ENCODE measurements at regions of chr20 and their contacts with region 1.

Region 1: GRCh38 chr20:24470746-24471582 is 1.5 kb downstream of the SYNDIG1 start:
- DNase-seq: no peak
- ATAC-seq: no peak
- H3K4me3 ChIP-seq: no peak overlapping the region
- H3K27ac ChIP-seq: no peak overlapping the region
- H3K4me1 ChIP-seq: no peaks in the 10 kb centered on the region
- H3K27me3 ChIP-seq: peaks cover 93% of the 10 kb centered on the region
- CTCF ChIP-seq: no peak

Region 2: GRCh38 chr20:23753589-23753988 is 717.4 kb before region 1 on chr20:
- CTCF ChIA-PET with region 1: no interaction called
- POLR2A ChIA-PET with region 1: no interaction called
- intact Hi-C with region 1: no loop called
- DNase-seq: no peak
- ATAC-seq: no peak
- H3K4me3 ChIP-seq: no peak overlapping the region
- H3K27ac ChIP-seq: no peak overlapping the region
- H3K4me1 ChIP-seq: peaks cover 15% of the 10 kb centered on the region
- H3K27me3 ChIP-seq: no peaks in the 10 kb centered on the region
- CTCF ChIP-seq: no peak

Region 3: DNA sequence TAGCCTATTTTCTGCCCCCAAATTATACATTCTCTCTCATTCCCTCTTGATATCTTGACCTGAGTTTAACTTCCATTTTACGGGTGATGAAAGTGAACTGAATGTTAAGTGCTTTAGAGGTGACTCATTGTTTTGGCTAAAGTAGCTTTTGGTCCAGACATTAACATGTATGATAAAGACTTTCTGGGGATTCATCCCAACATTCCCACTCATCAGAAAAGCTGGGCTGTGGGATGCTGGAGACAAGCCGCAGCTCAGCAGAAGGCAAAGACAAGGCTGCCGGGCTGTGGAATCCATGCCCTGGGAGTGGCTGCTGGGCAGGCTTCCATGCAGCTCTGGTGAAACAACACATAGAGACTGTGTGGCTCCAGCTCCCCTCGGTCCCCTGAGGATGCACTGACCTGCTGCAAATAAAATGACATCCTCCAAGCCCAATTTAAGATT is 91.5 kb before region 1 on chr20:
- CTCF ChIA-PET with region 1: no interaction called
- POLR2A ChIA-PET with region 1: interaction called, 19 read pairs
- intact Hi-C with region 1: no loop called
- DNase-seq: no peak
- ATAC-seq: no peak
- H3K4me3 ChIP-seq: no peak overlapping the region
- H3K27ac ChIP-seq: no peak overlapping the region
- H3K4me1 ChIP-seq: no peaks in the 10 kb centered on the region
- H3K27me3 ChIP-seq: peaks cover 68% of the 10 kb centered on the region
- CTCF ChIP-seq: no peak

Region 4: GRCh38 chr20:24485981-24486380 is 15.0 kb after region 1 on chr20:
- CTCF ChIA-PET with region 1: no interaction called
- POLR2A ChIA-PET with region 1: no interaction called
- intact Hi-C with region 1: no loop called
- DNase-seq: no peak
- ATAC-seq: no peak
- H3K4me3 ChIP-seq: no peak overlapping the region
- H3K27ac ChIP-seq: no peak overlapping the region
- H3K4me1 ChIP-seq: no peaks in the 10 kb centered on the region
- H3K27me3 ChIP-seq: peaks cover 72% of the 10 kb centered on the region
- CTCF ChIP-seq: no peak

Region 5: DNA sequence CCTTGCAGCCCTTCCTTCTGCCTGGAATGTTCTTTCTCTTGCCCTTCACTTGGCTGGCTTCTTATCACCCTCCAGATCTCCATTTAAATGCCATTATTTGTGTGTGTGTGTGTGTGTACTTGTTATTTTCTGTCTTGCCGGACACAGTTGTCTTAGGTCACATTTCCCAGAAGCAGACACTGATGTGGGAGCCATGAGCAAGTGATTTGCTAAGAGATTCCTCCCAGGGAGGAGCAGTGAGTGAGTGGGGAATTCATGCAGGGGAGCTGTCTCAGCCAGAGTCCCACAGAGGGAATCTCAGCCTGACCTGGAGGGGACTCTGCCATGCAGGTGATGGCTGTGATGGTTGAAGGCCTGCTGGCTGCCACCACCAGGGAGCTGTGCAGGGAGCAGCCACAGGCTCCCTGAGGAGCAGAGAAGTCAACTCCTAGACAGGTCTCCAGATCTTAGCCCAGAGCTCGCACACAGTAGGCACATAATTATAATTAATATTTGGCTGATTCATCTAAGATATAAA is 94.9 kb after region 1 on chr20:
- CTCF ChIA-PET with region 1: no interaction called
- POLR2A ChIA-PET with region 1: no interaction called
- intact Hi-C with region 1: no loop called
- DNase-seq: no peak
- ATAC-seq: no peak
- H3K4me3 ChIP-seq: no peak overlapping the region
- H3K27ac ChIP-seq: no peak overlapping the region
- H3K4me1 ChIP-seq: no peaks in the 10 kb centered on the region
- H3K27me3 ChIP-seq: peaks cover 76% of the 10 kb centered on the region
- CTCF ChIP-seq: no peak